ENCODE measurements at regions of chr20 and their contacts with region 1.

Region 1: DNA sequence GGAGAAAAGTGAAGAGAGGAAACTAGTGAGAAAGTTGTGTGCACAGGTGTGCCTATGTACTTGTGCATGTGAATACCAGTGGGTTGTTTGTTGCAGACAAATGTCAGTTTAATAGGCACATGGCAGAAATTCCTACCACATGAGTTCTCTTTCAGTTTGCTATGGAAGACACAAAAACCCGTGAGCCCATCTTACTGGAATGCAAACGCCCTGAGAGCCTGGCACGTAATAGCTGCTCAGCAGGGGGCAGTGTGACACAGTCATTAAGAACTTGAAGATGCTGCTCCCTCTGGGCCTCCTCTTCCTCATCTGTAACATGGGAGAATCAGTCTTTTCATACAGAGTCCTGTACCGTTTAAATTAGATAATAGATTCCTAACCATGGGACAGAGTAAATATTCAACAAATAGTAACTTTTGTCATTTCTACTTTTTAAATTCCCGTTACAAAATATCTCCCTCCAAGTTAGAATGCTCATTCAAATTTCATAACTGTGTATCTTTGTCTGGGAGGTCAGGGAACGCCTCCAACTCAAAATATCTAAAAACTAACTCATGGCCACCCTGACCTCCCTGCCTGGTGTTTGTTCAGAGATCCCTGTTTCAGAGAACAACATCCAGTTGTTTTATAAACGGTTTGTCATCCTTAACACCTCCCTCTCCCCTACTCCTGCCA is 802.9 kb downstream of the MAFB start:
- DNase-seq: no peak
- H3K4me3 ChIP-seq: no peak overlapping the region
- H3K27ac ChIP-seq: no peak overlapping the region
- H3K4me1 ChIP-seq: peaks cover 0 to 12% (median 8%) of the 10 kb centered on the region in 4 donors
- H3K27me3 ChIP-seq: no peaks in the 10 kb centered on the region
- CTCF ChIP-seq: peak; percentile 57 to 68 (median 61)
- EP300 ChIP-seq: no peak
- POLR2A ChIP-seq: no peak

Region 2: DNA sequence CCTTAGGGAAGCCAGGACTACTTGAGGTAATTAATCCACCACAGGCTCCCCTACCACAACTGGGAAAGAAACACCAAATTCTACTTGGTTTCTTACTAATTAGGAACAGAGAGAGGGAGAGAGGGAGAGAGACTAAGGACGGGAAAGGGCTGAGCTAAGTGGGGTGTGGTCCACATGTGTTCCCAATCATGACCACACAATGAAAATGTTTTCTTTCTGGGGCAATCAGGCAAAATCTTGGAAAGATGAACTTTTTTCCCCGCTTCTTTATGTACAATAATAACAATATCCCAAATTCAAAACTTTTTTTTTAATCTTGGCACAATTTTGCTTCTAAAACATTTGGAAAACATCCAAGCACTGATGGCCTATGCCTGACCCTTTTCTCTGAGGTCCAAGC is 68.5 kb after region 1 on chr20:
- intact Hi-C with region 1: no loop called
- DNase-seq: no peak
- H3K4me3 ChIP-seq: no peak overlapping the region
- H3K27ac ChIP-seq: no peak overlapping the region
- H3K4me1 ChIP-seq: no peaks in the 10 kb centered on the region
- H3K27me3 ChIP-seq: no peaks in the 10 kb centered on the region
- CTCF ChIP-seq: no peak
- EP300 ChIP-seq: no peak
- POLR2A ChIP-seq: no peak

Region 3: DNA sequence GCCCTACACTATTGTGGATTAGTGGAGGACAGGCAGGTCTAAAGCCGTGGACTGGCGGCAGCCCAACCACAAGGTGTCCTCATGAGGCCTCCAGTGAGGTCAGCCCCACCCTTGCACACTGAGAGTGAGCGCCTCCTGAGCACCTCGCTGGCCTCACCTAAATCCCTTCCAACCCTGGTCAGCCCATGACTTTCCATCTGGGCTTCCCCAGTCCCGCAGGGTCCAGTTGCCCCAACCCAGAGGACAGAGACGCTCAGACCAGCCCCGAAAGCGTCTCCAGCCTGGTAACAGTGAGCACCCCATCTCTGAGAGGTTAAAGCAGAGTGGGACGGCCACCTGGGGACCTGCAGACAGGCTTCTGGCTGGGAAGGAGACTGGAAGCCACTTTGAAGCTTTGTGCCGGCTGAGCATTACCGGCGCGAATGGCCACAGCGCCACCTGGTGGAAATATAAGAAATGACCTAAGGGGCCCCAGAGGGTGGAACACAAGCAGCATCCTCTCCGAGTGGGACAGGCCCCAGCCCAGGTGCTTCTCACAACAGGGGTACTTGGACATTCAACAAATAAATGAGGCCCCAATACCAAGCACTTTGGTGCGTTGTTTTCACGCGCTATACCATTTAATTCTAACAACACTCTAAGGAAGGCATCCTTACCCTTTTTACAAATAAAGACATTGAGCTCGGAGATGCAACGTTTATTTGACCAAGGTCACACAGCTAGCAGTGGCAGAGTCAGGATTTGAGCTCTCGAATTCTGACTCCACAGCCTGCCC is 1076.8 kb after region 1 on chr20:
- intact Hi-C with region 1: loop called (anchors 5 kb)
- DNase-seq: peak; percentile 93
- H3K4me3 ChIP-seq: no peak overlapping the region
- H3K27ac ChIP-seq: no peak overlapping the region
- H3K4me1 ChIP-seq: peaks cover 0 to 5% (median 2%) of the 10 kb centered on the region in 4 donors
- H3K27me3 ChIP-seq: no peaks in the 10 kb centered on the region
- CTCF ChIP-seq: peak; percentile 82 to 91 (median 91)
- EP300 ChIP-seq: no peak
- POLR2A ChIP-seq: no peak